GM10248 (cell line): ENCODE measurements at regions of chr10 and their contacts with region 1.

Region 1: DNA sequence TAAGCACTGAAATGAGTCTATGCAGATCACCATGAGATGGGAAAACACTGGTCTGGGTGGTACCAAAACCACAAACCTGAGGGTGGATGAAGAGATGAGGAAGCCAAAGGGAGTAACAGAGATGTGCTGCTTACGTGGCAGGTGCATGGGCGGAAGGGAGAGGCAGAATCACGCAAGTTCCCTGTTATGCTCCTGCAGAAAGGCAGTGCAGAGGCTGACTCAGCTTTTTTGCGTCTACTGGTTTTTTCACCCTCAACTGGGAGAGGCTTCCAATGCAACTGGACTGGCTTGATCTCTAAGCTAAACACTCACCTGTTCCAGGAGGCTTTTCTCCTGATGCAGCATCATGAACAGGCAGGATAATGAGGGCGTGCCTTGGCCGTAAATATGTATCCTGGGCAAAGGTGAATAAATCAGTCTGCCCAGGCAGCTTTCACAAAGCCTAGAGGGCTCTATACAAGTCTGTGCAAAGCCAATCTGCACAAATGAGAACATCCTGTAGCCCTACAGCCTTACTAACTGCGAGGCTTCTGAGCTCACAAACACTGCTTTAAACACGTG is 95.4 kb upstream of the AFAP1L2 start:
- DNase-seq: peak; percentile 24
- CTCF ChIP-seq: no peak

Region 2: GRCh38 chr10:114486938-114487814 is 12.5 kb before region 1 on chr10:
- CTCF ChIA-PET with region 1: interaction called, 21 read pairs
- POLR2A ChIA-PET with region 1: no interaction called
- DNase-seq: no peak
- CTCF ChIP-seq: no peak